ENCODE measurements at regions of chr2 and their contacts with region 1.

Region 1: DNA sequence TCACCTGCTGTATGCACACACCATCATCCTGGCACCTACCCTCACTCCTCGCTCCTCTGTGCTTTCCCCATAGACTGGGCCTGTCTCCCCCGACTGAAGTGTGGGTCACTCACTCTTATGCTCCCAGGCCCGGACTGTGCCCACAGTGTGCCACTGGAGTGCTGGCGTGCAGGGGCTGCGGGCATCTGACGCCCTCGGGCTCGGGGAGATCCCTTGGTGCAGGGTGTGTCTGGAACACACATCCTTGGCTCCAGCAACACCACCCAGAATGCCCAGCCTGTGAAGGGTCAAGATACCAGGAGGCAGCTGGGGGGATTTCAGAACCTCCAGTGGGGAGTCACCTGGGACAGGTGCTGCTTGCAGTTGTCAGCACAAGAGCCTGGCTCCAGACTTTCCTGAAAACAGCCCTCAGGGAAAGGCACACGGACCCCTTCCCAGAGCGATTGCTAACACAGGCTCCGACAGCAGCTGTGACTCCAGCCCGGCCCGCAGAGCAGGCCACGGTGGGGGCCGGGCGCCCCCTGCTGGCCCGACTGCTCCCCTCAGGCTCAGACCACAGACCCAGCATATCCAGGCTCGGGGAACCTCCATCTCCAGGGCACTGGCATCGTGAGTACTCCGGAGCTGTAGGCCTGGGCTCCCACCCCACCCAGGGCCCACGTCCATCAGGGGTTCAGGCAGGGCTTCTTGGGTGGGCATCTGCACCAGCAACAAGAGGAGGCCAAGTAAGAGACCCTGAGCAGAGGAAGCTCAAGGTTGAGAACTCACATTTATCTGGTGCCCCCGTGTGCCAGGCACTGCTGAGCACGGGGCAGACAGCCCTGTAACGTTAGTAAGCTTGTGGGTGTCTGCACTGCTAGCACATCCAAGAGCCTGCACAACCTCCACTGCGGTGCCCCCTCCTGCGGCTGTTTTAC is 8.6 kb downstream of the HS1BP3 start:
- DNase-seq: no peak
- H3K4me3 ChIP-seq: no peak overlapping the region
- H3K27me3 ChIP-seq: no peaks in the 10 kb centered on the region
- CTCF ChIP-seq: peak; percentile 98

Region 2: GRCh38 chr2:20378792-20379519 is 263.4 kb before region 1 on chr2:
- CTCF ChIA-PET with region 1: interaction called, 77 read pairs
- POLR2A ChIA-PET with region 1: no interaction called
- DNase-seq: peak; percentile 58
- H3K4me3 ChIP-seq: no peak overlapping the region
- H3K27me3 ChIP-seq: no peaks in the 10 kb centered on the region
- CTCF ChIP-seq: peak; percentile 97

Region 3: GRCh38 chr2:20398956-20399567 is 243.3 kb before region 1 on chr2:
- CTCF ChIA-PET with region 1: interaction called, 53 read pairs
- POLR2A ChIA-PET with region 1: no interaction called
- DNase-seq: no peak
- H3K4me3 ChIP-seq: no peak overlapping the region
- H3K27me3 ChIP-seq: peaks cover 5% of the 10 kb centered on the region
- CTCF ChIP-seq: no peak

Region 4: DNA sequence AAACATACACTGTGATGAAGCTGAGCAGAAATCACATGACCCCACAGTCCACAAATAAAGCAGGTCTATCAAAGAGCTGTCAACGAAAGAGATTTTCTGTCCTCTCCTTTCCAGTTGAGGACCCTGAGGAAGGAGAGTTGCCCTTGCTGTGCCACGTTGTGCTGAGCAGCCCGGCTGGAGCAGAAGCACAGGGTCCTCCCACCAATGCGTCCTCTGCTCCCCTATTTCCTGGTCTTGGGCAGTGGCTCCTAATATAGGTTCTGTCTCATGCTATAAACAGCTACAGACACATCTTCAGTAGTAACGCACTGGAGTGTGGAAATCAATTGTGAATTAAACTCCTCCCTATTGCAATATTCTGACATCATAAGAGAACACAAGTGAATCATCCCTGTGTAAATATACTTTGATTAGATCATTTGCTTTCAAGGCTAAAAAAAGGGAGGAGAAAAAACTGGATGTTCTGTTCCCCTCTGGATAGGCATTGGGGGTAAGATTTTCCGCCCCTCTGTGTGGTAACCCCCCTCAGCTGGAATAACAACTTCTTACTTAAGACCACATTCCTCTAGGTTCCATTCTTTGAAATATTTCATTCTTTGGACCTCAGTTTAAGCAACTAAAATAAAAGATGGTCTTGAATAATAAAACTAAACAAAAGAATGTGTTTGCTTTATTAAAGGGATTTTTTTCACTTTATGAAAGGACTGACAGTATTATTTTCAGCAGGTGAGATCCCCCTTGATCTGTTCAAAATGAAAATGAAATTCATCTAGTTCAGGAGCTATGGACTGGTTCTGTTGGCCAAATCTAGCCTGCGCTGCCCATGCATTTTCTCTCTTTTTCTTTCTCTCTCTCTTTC is 203.8 kb before region 1 on chr2:
- CTCF ChIA-PET with region 1: interaction called, 51 read pairs
- POLR2A ChIA-PET with region 1: no interaction called
- DNase-seq: no peak
- H3K4me3 ChIP-seq: no peak overlapping the region
- H3K27me3 ChIP-seq: peaks cover 1% of the 10 kb centered on the region; the same call in 1 of the 2 replicates
- CTCF ChIP-seq: no peak

Region 5: DNA sequence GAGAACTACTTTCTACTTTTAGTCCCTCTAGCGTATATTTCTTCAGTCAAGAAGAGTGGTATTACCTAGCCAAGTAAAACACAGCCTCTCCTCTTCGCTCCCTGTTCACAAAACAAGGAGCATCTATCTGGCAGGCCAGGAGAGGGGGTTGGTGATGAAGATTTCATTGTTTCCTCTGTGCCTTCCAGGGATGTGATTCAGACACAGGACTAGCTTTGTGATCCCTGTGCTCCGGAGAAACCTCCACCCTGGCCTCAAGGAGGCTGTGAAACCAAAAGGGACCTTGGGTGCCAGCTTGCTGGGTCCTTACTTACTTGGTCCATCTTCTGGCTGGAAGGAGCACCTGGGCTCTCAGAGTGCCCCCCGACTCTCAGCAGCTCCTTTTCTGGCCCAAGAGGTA is 189.8 kb before region 1 on chr2:
- CTCF ChIA-PET with region 1: interaction called, 16 read pairs
- POLR2A ChIA-PET with region 1: no interaction called
- DNase-seq: no peak
- H3K4me3 ChIP-seq: no peak overlapping the region
- H3K27me3 ChIP-seq: no peaks in the 10 kb centered on the region
- CTCF ChIP-seq: peak; percentile 8; the same call in 1 of the 2 replicates

Region 6: DNA sequence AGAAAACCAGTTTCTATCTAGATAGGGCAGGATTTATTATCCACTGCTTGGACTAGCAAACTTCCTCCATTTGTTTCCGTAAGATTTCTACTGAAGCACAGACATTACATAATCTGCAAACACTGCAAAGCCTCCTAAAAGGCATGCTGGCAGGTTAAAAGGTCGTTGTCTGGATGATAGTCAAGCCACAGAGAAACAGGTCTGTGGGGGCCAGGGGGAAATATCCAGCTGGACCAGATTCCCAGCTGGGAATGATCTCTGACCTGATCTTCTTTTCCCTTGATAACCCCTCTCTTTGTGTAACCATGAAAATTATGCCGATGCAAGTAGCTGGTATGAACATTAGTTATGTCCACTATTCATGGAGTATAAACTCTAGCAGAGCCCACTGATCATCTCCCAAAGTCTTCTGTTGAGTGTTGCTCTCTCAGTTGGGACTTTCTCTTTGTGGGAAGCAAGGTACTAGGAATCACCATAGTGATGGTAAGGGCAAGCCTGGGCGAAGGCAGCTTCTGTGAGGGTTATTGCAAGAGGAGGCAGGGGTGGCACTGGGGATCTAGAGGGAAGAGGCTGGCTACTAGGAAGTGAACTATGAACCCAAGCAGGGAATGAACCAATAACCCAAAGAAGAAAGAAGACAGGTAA is 85.9 kb after region 1 on chr2:
- CTCF ChIA-PET with region 1: no interaction called
- POLR2A ChIA-PET with region 1: no interaction called
- DNase-seq: no peak
- H3K4me3 ChIP-seq: no peak overlapping the region
- H3K27me3 ChIP-seq: no peaks in the 10 kb centered on the region
- CTCF ChIP-seq: no peak

Region 7: GRCh38 chr2:20755132-20755800 is 113.0 kb after region 1 on chr2:
- CTCF ChIA-PET with region 1: no interaction called
- POLR2A ChIA-PET with region 1: no interaction called
- DNase-seq: no peak
- H3K4me3 ChIP-seq: no peak overlapping the region
- H3K27me3 ChIP-seq: no peaks in the 10 kb centered on the region
- CTCF ChIP-seq: peak; percentile 35; the same call in 1 of the 2 replicates

Measured in BJ (cell line).